ENCODE measurements at regions of chr4 and their contacts with region 1.

Region 1: GRCh38 chr4:145557720-145558119 is 61.5 kb upstream of the MMAA start:
- DNase-seq: no peak

Region 2: DNA sequence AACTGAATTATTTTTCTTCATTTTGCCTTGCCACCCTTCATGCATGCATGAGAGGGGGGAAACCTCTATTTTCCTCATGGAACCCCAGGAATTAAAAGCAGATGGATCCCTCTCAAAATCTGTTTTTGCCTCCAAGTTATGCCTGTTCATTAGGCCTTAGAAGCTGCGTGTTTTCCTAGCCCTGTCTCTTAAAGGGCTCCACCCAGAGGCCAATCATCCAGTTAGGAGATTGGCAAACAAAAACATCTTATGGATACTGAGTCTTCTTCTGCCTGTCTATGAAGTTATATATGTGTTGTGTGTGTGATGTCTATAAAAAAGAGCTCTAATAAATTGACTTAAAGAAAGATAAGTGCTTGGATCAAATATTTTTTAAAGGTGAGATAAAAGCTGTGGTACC is 602.6 kb before region 1 on chr4:
- intact Hi-C with region 1: no loop called
- DNase-seq: no peak

Region 3: DNA sequence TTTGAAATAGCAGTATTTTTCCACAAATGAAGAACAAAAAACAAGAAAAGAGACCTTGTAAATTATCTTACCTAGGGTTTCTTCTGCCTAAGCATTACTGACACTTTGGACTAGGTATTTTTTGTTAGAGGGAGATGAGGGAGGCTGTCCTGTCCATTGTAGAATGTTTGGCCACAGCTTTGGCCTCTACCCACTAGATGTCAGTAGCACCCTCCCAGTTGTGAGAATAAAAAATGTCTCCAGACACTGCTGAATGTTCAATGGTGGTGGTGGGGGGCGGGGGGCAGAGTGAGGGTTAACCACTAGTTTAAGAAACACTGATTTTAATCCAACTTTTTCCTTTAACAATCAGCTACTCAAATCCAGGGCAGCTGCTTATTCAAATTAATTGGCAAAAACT is 403.1 kb before region 1 on chr4:
- intact Hi-C with region 1: loop called (anchors 10 kb)
- DNase-seq: no peak

Region 4: GRCh38 chr4:145481164-145481941 is 76.4 kb before region 1 on chr4 and contains the start of gene SMAD1:
- intact Hi-C with region 1: loop called (anchors 5 kb)
- DNase-seq: peak; percentile 91
- total RNA-seq, gene SMAD1: 10.8 TPM

Region 5: DNA sequence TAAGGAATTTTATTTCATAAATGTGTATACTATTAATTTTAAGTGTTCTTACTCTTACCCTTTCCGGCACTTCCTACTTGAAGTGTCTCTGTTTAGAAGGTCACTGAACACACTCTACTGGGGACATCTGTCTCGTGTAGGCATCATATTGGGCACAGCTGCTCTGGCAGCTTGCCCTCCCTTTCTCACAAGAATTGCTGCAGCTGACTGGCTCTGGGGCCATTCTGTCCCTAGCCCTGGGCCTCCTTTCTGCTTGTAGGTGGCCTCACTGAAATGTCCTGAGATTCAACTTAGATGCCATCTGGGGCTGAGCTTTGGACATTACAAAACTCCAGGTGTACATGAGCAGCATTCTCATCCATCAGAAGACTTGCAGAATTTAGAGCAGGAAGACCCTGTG is 26.5 kb before region 1 on chr4:
- intact Hi-C with region 1: no loop called
- DNase-seq: no peak

Measured in cardiac septum (tissue), 1 donor.